Naive thymus-derived CD4-positive, alpha-beta T cell (primary cell): ENCODE measurements at regions of chr3 and their contacts with region 1.

Region 1: GRCh38 chr3:121545574-121546455 is at the start of gene POLQ:
- DNase-seq: peak; percentile 64 to 89 (median 82)
- ATAC-seq: peak; percentile 99
- H3K4me3 ChIP-seq: peak within 1 kb of the TSS; percentile 81
- H3K4me3 Mint-ChIP-seq: peak within 1 kb of the TSS; percentile 87 to 95 (median 92)
- H3K27ac ChIP-seq: peak within 1 kb of the TSS; percentile 70
- H3K27ac Mint-ChIP-seq: peak within 1 kb of the TSS; percentile 84 to 97 (median 94)
- H3K4me1 ChIP-seq: peaks cover 0 to 5% of the 10 kb centered on the region in 2 donors
- H3K4me1 Mint-ChIP-seq: peaks cover 6 to 38% (median 10%) of the 10 kb centered on the region in 7 donors
- H3K27me3 ChIP-seq: no peaks in the 10 kb centered on the region
- H3K27me3 Mint-ChIP-seq: no peaks in the 10 kb centered on the region
- total RNA-seq, gene POLQ: 0.17 to 26.6 (median 0.38) TPM

Region 2: DNA sequence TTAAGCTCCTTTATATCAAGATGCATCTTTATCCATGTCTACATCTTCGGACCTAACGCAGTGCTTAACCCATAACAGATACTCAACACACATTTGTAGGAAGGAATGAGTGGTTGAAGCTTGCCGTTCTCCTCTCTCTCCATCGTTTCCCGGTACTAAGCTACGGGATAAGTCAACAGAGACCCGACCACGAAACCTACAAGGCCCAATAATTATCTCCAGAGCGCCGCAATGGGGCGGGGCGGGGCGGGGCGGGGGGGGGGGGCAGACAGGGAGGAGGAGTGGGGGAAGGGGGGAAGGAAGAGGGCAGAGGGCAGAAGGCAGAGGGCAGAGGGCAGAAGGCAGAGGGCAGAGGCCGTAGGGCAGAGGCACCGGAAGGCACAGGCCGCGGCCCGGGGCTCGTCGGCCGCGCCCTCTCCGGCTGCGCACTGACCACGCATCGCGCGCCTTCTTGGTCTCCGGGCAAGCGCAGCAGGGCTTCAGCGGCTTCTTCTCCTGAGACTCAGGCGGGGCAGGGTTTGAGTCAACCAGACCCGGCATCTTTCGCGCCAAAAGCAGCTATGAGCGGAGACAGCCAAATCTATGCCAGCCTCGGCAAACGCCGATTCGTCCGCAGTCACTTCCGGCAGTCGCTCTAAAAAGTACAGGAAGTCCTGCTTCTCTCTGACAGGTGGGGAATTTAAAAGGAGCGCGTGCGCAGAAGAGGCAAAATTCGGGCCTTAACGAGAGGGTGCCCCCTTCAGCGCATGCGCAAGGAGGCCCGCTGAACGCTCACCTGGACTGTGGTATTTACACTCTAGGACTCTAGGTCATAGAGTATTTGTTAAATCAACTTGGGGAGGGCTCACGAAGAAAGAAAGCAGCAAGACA is 1868.8 kb before region 1 on chr3 and contains the start of gene COX17:
- CTCF ChIA-PET with region 1: no interaction called
- POLR2A ChIA-PET with region 1: no interaction called
- intact Hi-C with region 1: loop called in 1 of 2 experiments (anchors 1 kb)
- DNase-seq: peak; percentile 87 to 98 (median 96)
- ATAC-seq: peak; percentile 91
- H3K4me3 ChIP-seq: peak within 1 kb of the TSS; percentile 62
- H3K4me3 Mint-ChIP-seq: peak within 1 kb of the TSS; percentile 78 to 98 (median 90)
- H3K27ac ChIP-seq: peak within 1 kb of the TSS; percentile 72
- H3K27ac Mint-ChIP-seq: peak within 1 kb of the TSS; percentile 94 to 99 (median 96)
- H3K4me1 ChIP-seq: peaks cover 14 to 16% of the 10 kb centered on the region in 2 donors
- H3K4me1 Mint-ChIP-seq: peaks cover 19 to 46% (median 41%) of the 10 kb centered on the region in 7 donors
- H3K27me3 ChIP-seq: no peaks in the 10 kb centered on the region
- H3K27me3 Mint-ChIP-seq: peaks cover 0 to 3% (median 0%) of the 10 kb centered on the region in 5 donors
- total RNA-seq, gene COX17: 25.6 to 55.0 (median 34.8) TPM

Region 3: DNA sequence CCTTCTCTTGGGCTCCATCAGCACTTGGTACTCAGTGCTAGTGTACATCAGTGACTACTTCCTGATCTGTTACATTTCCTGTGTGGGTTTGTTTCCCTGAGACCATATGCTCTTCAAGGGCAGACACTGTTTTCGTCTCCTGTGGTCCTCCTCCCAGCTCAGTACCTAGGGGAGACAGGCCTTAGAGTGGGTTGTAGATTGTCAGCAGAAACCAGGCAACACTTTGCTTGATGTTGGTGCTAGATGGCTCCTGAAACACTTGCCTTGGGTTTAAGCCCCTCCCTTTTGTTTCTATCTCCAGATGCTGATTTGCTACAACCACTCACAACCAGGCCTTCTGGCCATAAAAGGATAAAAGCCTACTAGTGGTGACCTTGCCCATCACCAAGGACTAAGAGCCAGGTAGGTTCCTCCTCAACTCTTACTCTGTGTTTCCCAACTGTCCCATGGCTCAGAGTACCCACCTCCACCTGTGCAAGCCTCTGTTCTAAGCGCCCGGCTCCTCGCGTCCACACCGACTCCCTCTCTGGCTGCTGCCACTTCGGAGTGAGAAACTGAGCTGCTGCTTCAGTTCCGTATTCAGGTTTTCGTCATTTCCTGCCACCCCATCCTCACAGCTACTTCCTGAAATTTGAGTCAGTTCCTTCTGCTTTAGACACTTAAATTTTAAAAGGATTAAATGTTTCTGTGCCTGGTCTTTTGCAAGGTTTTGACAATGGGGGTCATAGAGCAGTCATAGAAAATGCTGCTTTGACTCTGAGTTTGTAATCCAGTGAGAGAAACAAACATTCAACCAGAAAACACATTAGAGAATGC is 114.7 kb after region 1 on chr3 and contains the start of gene HCLS1:
- CTCF ChIA-PET with region 1: no interaction called
- POLR2A ChIA-PET with region 1: interaction called, 9 read pairs
- intact Hi-C with region 1: loop called (anchors 1 to 2 kb)
- DNase-seq: peak; percentile 60 to 87 (median 79)
- ATAC-seq: peak; percentile 87
- H3K4me3 ChIP-seq: peak within 1 kb of the TSS; percentile 90
- H3K4me3 Mint-ChIP-seq: peak within 1 kb of the TSS; percentile 82 to 99 (median 95)
- H3K27ac ChIP-seq: peak within 1 kb of the TSS; percentile 90
- H3K27ac Mint-ChIP-seq: peak within 1 kb of the TSS; percentile 96 to 100 (median 99)
- H3K4me1 ChIP-seq: peaks cover 34 to 41% of the 10 kb centered on the region in 2 donors
- H3K4me1 Mint-ChIP-seq: peaks cover 41 to 68% (median 57%) of the 10 kb centered on the region in 7 donors
- H3K27me3 ChIP-seq: no peaks in the 10 kb centered on the region
- H3K27me3 Mint-ChIP-seq: no peaks in the 10 kb centered on the region
- total RNA-seq, gene HCLS1: 275 to 357 (median 311) TPM

Region 4: DNA sequence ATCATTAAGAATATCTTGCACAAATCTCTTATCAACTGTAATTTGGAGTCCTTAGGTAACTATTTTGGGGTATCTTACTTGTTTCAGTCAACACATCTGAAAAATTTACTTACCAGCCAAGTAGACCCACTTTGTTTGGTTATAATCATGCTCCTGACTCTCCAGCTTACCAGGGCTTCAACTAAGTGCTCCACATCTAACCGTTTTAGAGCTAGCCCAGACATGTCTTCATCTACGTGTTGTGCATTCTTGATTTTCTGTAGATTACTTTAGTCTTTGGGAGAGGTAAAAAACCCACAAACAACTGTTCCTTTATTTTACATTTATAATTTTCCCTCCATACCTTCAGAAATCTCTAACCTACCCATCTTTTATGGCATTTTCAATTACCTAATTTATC is 306.4 kb after region 1 on chr3:
- CTCF ChIA-PET with region 1: no interaction called
- POLR2A ChIA-PET with region 1: no interaction called
- intact Hi-C with region 1: loop called in 1 of 2 experiments (anchors 5 kb)
- DNase-seq: no peak
- ATAC-seq: no peak
- H3K4me3 ChIP-seq: no peak overlapping the region
- H3K4me3 Mint-ChIP-seq: no peak overlapping the region
- H3K27ac ChIP-seq: no peak overlapping the region
- H3K27ac Mint-ChIP-seq: no peak overlapping the region
- H3K4me1 ChIP-seq: no peaks in the 10 kb centered on the region
- H3K4me1 Mint-ChIP-seq: peaks cover 0 to 3% (median 0%) of the 10 kb centered on the region in 7 donors
- H3K27me3 ChIP-seq: no peaks in the 10 kb centered on the region
- H3K27me3 Mint-ChIP-seq: no peaks in the 10 kb centered on the region

Region 5: DNA sequence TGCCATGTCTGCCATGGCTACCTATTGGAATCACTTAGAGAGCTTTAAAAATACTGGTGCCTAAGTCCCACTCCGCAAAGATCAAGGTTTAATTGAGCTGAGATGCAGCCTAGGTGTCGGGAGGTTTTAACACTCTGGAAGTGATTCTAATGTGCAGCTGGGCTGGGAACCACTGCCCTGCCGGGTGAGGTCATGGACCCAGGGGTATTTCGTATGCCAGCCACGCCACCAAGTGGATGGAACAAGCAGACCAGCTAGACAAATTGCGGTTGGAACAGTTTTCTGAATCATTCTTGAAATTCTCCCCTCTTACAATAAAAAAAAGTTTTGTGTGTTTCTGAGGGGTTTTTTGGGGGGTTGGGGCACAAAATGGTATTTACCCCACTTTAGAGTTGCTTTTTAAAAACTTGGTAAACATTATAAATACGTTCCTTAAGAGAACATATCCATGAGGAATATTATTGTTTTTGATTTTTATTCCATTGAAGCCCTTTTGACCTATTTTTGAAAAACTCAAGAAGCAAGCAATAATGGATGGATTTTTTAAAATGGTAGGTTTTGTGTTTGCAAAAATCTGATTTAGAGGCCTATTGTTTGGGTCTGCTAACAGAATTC is 713.0 kb after region 1 on chr3:
- CTCF ChIA-PET with region 1: no interaction called
- POLR2A ChIA-PET with region 1: no interaction called
- intact Hi-C with region 1: loop called (anchors 1 to 2 kb)
- DNase-seq: peak in 1 of 9 donors; percentile 68
- ATAC-seq: peak; percentile 69
- H3K4me3 ChIP-seq: no peak overlapping the region
- H3K4me3 Mint-ChIP-seq: no peak overlapping the region
- H3K27ac ChIP-seq: no peak overlapping the region
- H3K27ac Mint-ChIP-seq: no peak overlapping the region
- H3K4me1 ChIP-seq: no peaks in the 10 kb centered on the region
- H3K4me1 Mint-ChIP-seq: peaks cover 0 to 14% (median 0%) of the 10 kb centered on the region in 7 donors
- H3K27me3 ChIP-seq: no peaks in the 10 kb centered on the region
- H3K27me3 Mint-ChIP-seq: peaks cover 12 to 26% (median 14%) of the 10 kb centered on the region in 5 donors

Region 6: GRCh38 chr3:122514123-122515019 is 968.6 kb after region 1 on chr3 and contains the start of gene KPNA1:
- CTCF ChIA-PET with region 1: no interaction called
- POLR2A ChIA-PET with region 1: interaction called, 3 read pairs
- intact Hi-C with region 1: loop called in 1 of 2 experiments (anchors 5 kb)
- DNase-seq: peak; percentile 81 to 92 (median 90)
- ATAC-seq: peak; percentile 92
- H3K4me3 ChIP-seq: peak within 1 kb of the TSS; percentile 80
- H3K4me3 Mint-ChIP-seq: peak within 1 kb of the TSS; percentile 77 to 100 (median 92)
- H3K27ac ChIP-seq: peak within 1 kb of the TSS; percentile 100
- H3K27ac Mint-ChIP-seq: peak within 1 kb of the TSS; percentile 78 to 97 (median 91)
- H3K4me1 ChIP-seq: peaks cover 6 to 21% of the 10 kb centered on the region in 2 donors
- H3K4me1 Mint-ChIP-seq: peaks cover 35 to 52% (median 46%) of the 10 kb centered on the region in 7 donors
- H3K27me3 ChIP-seq: no peaks in the 10 kb centered on the region
- H3K27me3 Mint-ChIP-seq: no peaks in the 10 kb centered on the region
- total RNA-seq, gene KPNA1: 50.6 to 70.2 (median 54.3) TPM

Region 7: DNA sequence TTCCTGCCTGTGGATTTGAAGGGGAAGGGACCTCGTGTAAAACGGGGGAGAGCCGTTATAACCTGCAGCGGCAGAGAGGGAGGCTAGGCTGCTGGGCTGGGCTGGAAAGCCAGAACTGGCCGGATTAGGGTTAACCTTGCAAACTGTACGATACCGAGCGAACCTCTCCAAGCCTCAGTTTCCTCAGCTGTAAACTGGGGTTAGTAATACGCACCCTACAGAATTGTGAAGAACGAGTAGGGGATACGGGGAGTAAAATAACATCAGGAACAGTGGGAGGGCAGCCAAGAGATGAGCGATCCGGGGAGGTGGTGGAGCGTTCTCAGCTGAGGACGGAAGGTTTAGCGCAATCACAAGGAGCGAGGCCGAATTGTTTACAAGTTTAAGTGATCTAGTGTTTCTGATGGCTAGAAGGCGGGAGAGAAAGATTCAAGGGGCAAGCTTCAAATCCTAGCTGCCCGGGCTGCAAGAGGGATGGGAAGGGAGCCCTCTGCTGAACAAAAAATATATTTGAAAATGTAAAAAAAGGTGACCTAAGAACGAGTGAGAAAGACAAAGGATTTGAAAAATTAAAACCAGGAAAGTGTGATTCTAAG is 1482.5 kb after region 1 on chr3:
- CTCF ChIA-PET with region 1: interaction called, 5 read pairs
- POLR2A ChIA-PET with region 1: no interaction called
- intact Hi-C with region 1: loop called in 1 of 2 experiments (anchors 1 kb)
- DNase-seq: peak in 5 of 9 donors; percentile 19 to 36 (median 28)
- ATAC-seq: peak; percentile 40
- H3K4me3 ChIP-seq: peak overlapping the region; percentile 62
- H3K4me3 Mint-ChIP-seq: peak overlapping the region; percentile 76 to 93 (median 80)
- H3K27ac ChIP-seq: no peak overlapping the region
- H3K27ac Mint-ChIP-seq: no peak overlapping the region
- H3K4me1 ChIP-seq: peaks cover 2 to 10% of the 10 kb centered on the region in 2 donors
- H3K4me1 Mint-ChIP-seq: peaks cover 12 to 20% (median 17%) of the 10 kb centered on the region in 7 donors
- H3K27me3 ChIP-seq: peaks cover 7 to 13% of the 10 kb centered on the region in 2 donors
- H3K27me3 Mint-ChIP-seq: peaks cover 33 to 62% (median 35%) of the 10 kb centered on the region in 5 donors